Endothelial cell of umbilical vein (primary cell): ENCODE measurements at regions of chr3 and their contacts with region 1.

Region 1: DNA sequence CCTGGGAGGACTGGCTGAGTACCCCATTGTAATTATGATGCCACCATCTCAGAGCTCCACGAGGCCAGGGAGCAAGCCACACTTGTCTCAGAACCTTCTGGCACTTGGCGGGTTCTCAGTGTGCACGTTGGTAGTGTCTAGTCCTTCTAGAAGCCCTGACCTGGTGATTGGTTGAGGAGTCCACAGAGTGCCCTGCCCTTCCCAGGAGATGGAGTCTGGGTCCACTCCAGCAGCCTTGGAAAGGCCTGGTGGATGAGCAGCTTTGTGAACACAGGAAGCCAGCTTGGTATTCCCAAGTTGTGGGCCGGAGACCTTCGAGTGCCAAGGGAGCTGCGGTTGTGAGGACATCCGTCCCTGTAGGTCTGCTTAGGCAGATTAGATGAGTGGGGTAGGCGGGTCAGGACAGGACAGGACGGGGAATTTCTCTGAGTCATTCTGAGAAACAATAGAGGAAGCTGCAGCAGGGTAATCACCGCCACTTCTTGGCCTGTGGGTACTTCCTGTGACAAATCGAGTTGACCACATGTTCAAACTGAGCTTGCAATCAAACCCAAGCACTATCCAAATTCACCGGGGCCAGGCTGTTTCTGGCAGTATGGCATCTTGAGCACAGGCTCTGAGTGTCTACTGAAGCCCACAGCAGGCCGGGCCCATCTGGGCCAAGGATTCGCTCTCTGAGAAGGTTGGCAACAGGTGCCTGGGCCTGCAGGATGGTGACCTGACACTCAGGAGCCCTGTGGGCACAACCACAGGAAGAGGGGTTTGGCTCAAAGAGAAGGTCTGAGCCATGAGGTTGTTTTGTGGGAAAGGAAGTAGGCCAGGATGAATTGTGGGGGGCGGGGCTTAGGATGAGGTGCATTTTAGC is 71.5 kb upstream of the PLXNA1 start:
- DNase-seq: peak; percentile 96
- H3K4me3 ChIP-seq: no peak overlapping the region
- H3K27ac ChIP-seq: peak overlapping the region; percentile 59
- H3K4me1 ChIP-seq: peaks cover 24% of the 10 kb centered on the region
- H3K27me3 ChIP-seq: peaks cover 11 to 23% of the 10 kb centered on the region in 2 experiments
- CTCF ChIP-seq: no peak
- POLR2A ChIP-seq: peak; percentile 62

Region 2: GRCh38 chr3:126277629-126278378 is 633.6 kb before region 1 on chr3:
- CTCF ChIA-PET with region 1: no interaction called
- POLR2A ChIA-PET with region 1: no interaction called
- dilution Hi-C with region 1: no loop called
- intact Hi-C with region 1: no loop called
- DNase-seq: no peak
- H3K4me3 ChIP-seq: no peak overlapping the region
- H3K27ac ChIP-seq: no peak overlapping the region
- H3K4me1 ChIP-seq: peaks cover 10% of the 10 kb centered on the region
- H3K27me3 ChIP-seq: peaks cover 0 to 2% of the 10 kb centered on the region in 2 experiments
- CTCF ChIP-seq: no peak
- POLR2A ChIP-seq: no peak

Region 3: GRCh38 chr3:126886217-126886616 is 25.2 kb before region 1 on chr3:
- CTCF ChIA-PET with region 1: interaction called, 3 read pairs
- POLR2A ChIA-PET with region 1: no interaction called
- dilution Hi-C with region 1: no loop called
- intact Hi-C with region 1: loop called (anchors 2 kb)
- DNase-seq: peak; percentile 69
- H3K4me3 ChIP-seq: no peak overlapping the region
- H3K27ac ChIP-seq: no peak overlapping the region
- H3K4me1 ChIP-seq: peaks cover 11% of the 10 kb centered on the region
- H3K27me3 ChIP-seq: no peaks in the 10 kb centered on the region
- CTCF ChIP-seq: no peak
- POLR2A ChIP-seq: no peak

Region 4: DNA sequence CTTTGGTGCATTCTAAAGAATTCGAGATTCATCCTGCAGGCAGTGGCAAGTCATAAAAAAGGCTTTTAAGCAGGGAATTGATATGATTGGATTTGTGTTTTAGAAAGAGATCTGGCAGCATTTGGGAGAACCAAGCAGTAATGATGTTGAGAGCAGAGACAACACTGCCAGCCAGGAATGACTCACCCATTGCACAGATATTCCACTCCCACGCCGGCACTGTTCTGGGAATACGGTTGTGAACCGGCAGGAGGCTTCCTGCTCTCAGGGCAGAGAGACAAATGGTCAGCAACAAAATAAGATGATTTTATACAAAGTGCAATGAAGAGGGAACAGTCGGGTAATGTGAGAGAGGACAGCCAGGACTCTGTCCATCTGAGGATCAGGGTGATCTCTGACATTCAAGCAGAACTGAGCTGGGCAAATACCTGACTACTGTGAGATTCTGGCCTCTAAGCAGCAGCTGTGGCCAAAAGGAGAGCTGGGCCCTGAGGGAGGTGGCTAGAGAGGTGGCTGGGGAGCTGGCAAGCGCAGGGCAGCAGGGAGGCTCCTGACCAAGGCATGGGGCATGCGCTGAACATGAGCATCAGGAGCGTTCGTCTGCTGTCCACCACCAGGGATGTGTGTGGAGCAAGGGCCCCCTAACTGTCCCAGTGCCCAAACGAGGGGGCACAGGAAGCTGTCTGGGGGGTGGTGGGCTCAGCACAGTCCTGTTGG is 15.4 kb after region 1 on chr3:
- CTCF ChIA-PET with region 1: interaction called, 26 read pairs
- POLR2A ChIA-PET with region 1: interaction called, 3 read pairs
- dilution Hi-C with region 1: no loop called
- intact Hi-C with region 1: loop called (anchors 1 kb)
- DNase-seq: peak; percentile 88
- H3K4me3 ChIP-seq: no peak overlapping the region
- H3K27ac ChIP-seq: peak overlapping the region; percentile 40
- H3K4me1 ChIP-seq: peaks cover 44% of the 10 kb centered on the region
- H3K27me3 ChIP-seq: peaks cover 3 to 29% of the 10 kb centered on the region in 2 experiments
- CTCF ChIP-seq: peak; percentile 16 to 30
- POLR2A ChIP-seq: no peak

Region 5: DNA sequence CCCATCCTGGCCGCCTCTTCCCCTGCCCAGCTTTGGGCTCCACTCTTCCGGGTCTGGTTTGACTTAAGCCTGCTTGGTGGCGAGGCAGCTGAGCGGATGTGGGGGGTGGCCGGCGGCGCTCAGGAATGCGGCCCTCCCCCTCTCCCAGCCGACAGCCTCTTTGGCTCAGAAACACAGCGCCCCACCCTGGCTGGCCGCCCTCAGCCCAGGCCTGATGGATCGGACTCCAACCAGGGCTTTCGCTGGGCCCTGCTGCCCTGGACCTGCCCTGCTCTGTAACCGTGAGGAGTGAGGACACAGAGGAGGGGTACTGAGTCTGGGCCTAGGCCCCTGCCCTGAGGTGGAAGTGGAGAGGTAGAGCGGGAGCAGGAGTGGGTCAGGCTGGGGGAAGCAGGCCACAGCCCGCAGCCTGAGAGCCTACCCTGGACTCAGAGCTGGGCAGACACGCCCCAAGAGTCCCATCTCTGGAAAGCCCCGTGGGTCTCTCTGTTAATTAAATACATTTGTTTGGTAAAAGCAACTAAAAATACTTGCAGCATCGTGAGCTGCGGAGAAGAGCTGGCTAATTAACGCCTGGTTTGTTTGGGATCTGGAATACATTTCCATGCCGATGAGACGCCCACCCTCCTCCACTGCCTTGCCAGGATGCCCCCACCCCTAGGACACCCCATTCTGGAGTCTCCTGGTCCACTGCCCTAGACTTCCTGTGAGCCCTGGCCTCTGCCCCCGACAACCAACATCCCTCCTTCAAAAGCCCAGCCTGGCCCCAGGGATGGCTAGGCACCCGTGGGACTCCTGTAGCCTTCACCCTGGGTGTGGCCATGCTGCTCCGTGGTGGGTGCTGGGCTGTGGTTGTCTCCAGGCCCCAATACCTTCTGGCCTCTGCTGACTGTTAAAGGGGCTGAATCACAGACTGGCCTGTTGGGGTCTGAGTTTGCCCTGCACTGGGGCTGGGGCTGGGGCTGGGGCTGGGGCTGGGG is 91.1 kb after region 1 on chr3:
- CTCF ChIA-PET with region 1: interaction called, 5 read pairs
- POLR2A ChIA-PET with region 1: no interaction called
- dilution Hi-C with region 1: no loop called
- intact Hi-C with region 1: loop called (anchors 1 kb)
- DNase-seq: peak; percentile 83
- H3K4me3 ChIP-seq: no peak overlapping the region
- H3K27ac ChIP-seq: peak overlapping the region; percentile 50
- H3K4me1 ChIP-seq: peaks cover 11% of the 10 kb centered on the region
- H3K27me3 ChIP-seq: no peaks in the 10 kb centered on the region
- CTCF ChIP-seq: peak; percentile 74 to 82
- POLR2A ChIP-seq: peak; percentile 32